ENCODE measurements at regions of chr17 and their contacts with region 1.

Region 1: GRCh38 chr17:16013943-16014407 is 14.4 kb downstream of the TTC19 start:
- DNase-seq: peak; percentile 50
- H3K4me3 ChIP-seq: no peak overlapping the region
- H3K27ac ChIP-seq: peak overlapping the region; percentile 20 to 91; a peak in 3 of 4 replicates
- H3K4me1 ChIP-seq: peaks cover 0 to 20% of the 10 kb centered on the region in 2 experiments; a peak in 2 of 4 replicates
- H3K27me3 ChIP-seq: no peaks in the 10 kb centered on the region
- CTCF ChIP-seq: peak; percentile 67
- EP300 ChIP-seq: no peak; a peak in 1 of 4 replicates
- RAD21 ChIP-seq: no peak

Region 2: GRCh38 chr17:15999439-16000350 is 14.3 kb before region 1 on chr17 and contains the starts of genes TTC19 and ZSWIM7:
- CTCF ChIA-PET with region 1: interaction called, 18 read pairs
- POLR2A ChIA-PET with region 1: interaction called, 4 read pairs
- DNase-seq: peak; percentile 99
- H3K4me3 ChIP-seq: peak within 1 kb of the TSS; percentile 82 to 91
- H3K27ac ChIP-seq: peak within 1 kb of the TSS; percentile 93 to 95
- H3K4me1 ChIP-seq: peaks cover 0 to 6% of the 10 kb centered on the region in 2 experiments; a peak in 2 of 4 replicates
- H3K27me3 ChIP-seq: no peaks in the 10 kb centered on the region
- CTCF ChIP-seq: no peak
- EP300 ChIP-seq: no peak
- RAD21 ChIP-seq: no peak
- polyA plus RNA-seq, gene TTC19: 6.6 and 6.9 TPM in 2 replicates
- polyA plus RNA-seq, gene ZSWIM7: 48.8 and 63.3 TPM in 2 replicates

Region 3: DNA sequence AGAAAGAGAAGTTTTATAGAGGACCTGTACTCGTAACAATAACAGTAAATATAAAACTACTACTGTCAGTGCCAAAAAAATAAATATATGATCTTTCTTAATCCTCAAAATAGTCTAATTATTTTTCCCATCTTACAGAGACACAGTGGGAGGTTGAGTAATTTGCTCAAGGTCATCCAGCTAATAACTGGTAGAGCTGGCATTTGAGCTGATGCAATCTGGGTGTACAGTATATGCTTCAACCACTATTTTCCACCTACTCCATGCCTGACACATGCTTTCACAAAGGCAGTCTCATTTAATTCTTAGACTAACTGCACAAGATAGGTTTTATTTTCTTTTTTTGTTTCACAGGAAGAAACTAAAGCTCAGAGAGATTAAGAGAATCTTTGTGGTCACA is 236.7 kb after region 1 on chr17:
- CTCF ChIA-PET with region 1: no interaction called
- POLR2A ChIA-PET with region 1: no interaction called
- DNase-seq: no peak
- H3K4me3 ChIP-seq: no peak overlapping the region
- H3K27ac ChIP-seq: no peak overlapping the region; a peak in 1 of 4 replicates
- H3K4me1 ChIP-seq: no peaks in the 10 kb centered on the region
- H3K27me3 ChIP-seq: no peaks in the 10 kb centered on the region
- CTCF ChIP-seq: no peak
- EP300 ChIP-seq: no peak
- RAD21 ChIP-seq: no peak

Measured in SK-N-SH (cell line).